Endothelial cell of umbilical vein (primary cell): ENCODE measurements at regions of chr22 and their contacts with region 1.

Region 1: DNA sequence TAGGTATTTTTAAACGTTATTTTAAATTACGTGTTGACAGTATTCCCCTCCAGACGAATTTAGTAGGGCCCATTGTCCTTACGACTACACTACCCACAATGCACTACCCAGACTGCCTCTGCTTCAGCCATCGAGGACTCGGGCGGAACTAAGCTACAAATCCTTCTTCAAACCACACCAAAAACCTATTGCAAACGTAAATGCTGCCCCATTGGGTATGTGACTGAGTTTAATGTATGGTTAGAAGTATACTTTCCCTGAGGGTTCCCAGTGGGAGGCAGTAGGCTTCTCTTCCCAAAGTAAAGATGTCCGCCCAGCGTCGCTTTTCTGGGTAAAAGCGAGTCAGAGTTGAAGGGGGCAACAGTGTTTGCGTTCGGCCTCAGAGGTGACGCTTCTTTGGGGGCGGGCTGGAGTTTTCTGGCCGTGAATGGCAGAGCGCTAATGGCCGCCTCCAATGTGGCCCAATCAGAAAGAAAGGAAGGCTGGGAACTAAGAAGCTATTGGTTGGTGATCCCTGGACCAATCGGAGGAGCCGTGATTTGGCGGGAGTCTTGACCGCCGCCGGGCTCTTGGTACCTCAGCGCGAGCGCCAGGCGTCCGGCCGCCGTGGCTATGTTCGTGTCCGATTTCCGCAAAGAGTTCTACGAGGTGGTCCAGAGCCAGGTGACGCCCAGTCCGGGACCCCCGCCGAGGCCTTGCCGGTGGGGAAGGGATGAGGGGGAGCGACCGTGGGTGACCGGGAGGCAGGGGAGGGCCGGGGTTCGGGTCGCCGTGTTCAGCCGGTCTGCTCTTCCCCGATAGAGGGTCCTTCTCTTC is at the start of gene CDC45:
- DNase-seq: peak; percentile 99
- H3K4me3 ChIP-seq: peak within 1 kb of the TSS; percentile 66 to 87 (median 83)
- H3K27ac ChIP-seq: peak within 1 kb of the TSS; percentile 100
- H3K4me1 ChIP-seq: peaks cover 48% of the 10 kb centered on the region
- H3K27me3 ChIP-seq: no peaks in the 10 kb centered on the region
- CTCF ChIP-seq: no peak
- POLR2A ChIP-seq: no peak
- total RNA-seq, gene CDC45: 40.6 and 44.7 TPM in 2 replicates

Region 2: DNA sequence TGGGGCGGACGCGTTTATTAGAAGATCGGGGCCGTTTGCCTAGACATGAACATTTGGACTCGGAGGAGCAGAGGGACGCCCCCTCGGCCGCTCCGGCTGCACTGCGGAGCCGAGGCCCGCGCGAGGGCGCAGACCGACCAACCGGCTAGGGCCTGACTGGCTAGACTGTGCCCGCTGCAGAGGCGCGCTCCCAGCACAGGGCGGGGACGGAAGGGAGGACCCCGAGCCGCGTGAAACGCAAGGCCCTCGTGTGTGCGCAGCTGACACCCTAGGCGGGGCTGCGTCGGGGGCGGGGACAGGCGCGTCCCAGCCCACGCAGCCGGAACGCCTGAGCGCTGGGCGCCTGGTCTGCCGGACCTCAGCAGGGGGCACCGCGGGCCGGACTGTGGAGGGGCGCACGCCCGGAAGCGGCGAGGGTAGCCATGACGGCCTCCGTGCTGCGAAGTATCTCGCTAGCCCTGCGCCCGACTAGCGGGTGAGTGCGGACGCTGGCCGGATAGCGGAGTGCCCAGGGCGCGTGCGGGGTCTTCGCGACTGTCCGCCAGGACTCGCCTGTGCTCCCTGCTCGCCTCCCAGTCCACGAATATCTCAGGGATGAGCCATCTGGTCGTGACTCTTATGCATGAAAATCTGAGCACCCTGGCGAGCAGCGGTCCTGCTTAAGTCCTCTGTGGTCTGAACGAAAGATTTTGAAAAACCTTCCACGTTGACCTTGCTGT is 47.3 kb before region 1 on chr22 and contains the start of gene MRPL40:
- CTCF ChIA-PET with region 1: interaction called, 5 read pairs
- POLR2A ChIA-PET with region 1: no interaction called
- dilution Hi-C with region 1: no loop called
- intact Hi-C with region 1: loop called (anchors 2 kb)
- DNase-seq: peak; percentile 94
- H3K4me3 ChIP-seq: peak within 1 kb of the TSS; percentile 86 to 88 (median 86)
- H3K27ac ChIP-seq: peak within 1 kb of the TSS; percentile 75
- H3K4me1 ChIP-seq: peaks cover 17% of the 10 kb centered on the region
- H3K27me3 ChIP-seq: no peaks in the 10 kb centered on the region
- CTCF ChIP-seq: no peak
- POLR2A ChIP-seq: peak; percentile 95
- total RNA-seq, gene MRPL40: 27.4 and 30.6 TPM in 2 replicates

Region 3: DNA sequence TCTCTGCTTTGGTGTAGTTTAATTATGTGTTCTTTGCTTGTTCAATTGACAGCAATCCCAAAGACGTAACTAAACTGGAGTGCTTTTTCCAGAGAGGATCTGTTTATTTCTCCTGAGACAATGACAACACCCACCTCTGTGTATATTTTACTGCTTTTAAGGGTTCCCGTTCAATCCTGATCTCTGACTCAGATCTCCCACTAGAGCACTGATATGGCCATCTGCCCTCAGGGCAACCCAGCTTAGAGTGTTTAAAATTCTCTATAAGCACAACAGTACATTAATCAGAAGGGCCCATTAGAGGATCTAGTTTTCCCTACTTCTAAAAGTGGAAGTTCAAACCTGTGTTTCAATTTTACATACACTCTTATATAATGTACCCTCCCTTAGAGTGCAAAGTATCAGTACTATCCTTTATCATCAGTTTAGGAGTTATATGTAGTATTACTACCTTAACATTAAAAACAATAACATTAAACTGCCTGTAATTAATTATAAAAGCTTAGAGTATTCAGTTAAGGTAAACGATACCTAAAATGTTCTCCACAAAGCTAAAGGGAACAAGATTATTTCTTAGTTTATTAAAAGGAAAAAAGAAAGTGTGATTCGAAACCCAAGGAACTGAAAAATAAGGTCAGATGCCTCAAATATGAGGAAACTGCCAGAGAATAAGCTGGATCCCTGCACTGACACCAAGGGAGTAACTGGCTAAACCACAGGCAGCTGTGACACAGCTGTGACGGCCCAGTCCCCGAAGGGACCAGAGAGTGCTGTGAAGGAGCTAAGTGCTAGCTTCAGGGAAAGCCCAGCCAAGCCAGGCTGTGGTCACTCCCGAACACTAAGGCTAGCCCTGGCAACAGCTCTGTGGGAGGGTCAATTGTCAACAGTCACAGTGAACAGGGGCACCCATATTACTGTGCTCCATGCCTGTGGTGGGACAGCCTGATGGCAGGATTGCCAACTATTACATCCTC is 15.8 kb before region 1 on chr22:
- CTCF ChIA-PET with region 1: interaction called, 12 read pairs
- POLR2A ChIA-PET with region 1: interaction called, 4 read pairs
- dilution Hi-C with region 1: no loop called
- intact Hi-C with region 1: no loop called
- DNase-seq: no peak
- H3K4me3 ChIP-seq: no peak overlapping the region
- H3K27ac ChIP-seq: no peak overlapping the region
- H3K4me1 ChIP-seq: no peaks in the 10 kb centered on the region
- H3K27me3 ChIP-seq: no peaks in the 10 kb centered on the region
- CTCF ChIP-seq: no peak
- POLR2A ChIP-seq: no peak

Region 4: GRCh38 chr22:19523240-19524169 is 43.9 kb after region 1 on chr22:
- CTCF ChIA-PET with region 1: no interaction called
- POLR2A ChIA-PET with region 1: interaction called, 5 read pairs
- dilution Hi-C with region 1: no loop called
- intact Hi-C with region 1: loop called (anchors 1 kb)
- DNase-seq: peak; percentile 60
- H3K4me3 ChIP-seq: peak overlapping the region; percentile 53 to 75 (median 61)
- H3K27ac ChIP-seq: peak overlapping the region; percentile 55
- H3K4me1 ChIP-seq: peaks cover 44% of the 10 kb centered on the region
- H3K27me3 ChIP-seq: no peaks in the 10 kb centered on the region
- CTCF ChIP-seq: no peak
- POLR2A ChIP-seq: peak; percentile 48

Region 5: GRCh38 chr22:19717691-19718455 is 238.3 kb after region 1 on chr22:
- CTCF ChIA-PET with region 1: no interaction called
- POLR2A ChIA-PET with region 1: no interaction called
- dilution Hi-C with region 1: no loop called
- intact Hi-C with region 1: loop called (anchors 10 kb)
- DNase-seq: peak; percentile 62
- H3K4me3 ChIP-seq: peak overlapping the region; percentile 13 to 51 (median 39)
- H3K27ac ChIP-seq: no peak overlapping the region
- H3K4me1 ChIP-seq: peaks cover 18% of the 10 kb centered on the region
- H3K27me3 ChIP-seq: no peaks in the 10 kb centered on the region
- CTCF ChIP-seq: peak; percentile 73 to 92
- POLR2A ChIP-seq: no peak